ENCODE measurements at regions of chr6 and their contacts with region 1.

Region 1: DNA sequence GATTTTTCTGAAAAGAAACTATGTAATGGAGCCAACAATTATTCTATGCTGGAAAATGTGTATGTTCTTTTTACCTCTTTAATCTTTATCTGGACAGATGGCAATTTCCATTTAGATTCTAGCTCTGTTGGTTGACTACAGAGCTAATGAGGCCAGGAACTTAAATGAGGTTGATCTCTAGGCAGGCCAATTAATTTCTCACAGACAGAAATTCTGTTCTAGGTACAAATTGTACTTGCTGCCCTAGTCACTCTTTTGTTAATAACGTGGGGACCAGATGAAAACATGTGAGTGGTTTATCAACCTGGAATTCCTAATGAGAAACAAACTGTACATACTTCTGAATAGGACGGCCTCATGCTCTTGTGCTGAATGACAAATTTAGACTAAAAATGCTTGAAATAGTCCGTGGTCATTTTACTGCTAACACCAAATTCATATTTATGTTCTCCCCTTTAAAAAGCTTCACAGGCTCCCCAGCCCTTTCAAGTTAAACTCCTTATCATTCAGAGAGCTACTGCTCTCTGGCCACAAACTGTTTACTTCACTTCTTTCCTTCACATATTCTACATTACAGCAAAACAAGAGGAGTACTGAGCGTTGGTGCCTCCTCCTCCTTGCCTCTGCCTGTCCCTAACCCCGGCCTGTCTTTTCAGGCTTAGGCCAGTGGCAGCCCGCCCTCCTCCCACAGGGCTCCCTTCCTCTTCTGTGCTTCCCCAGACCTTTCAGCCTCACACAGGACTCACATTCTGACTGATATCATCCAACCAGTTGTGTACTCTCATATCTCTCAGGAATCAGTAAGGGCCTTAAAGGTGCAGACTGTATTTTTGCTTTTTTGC is 41.4 kb downstream of the DTNBP1 start:
- DNase-seq: no peak
- H3K4me3 ChIP-seq: no peak overlapping the region
- H3K4me3 Mint-ChIP-seq: peak overlapping the region in 1 of 8 donors; percentile 24
- H3K27ac ChIP-seq: no peak overlapping the region
- H3K27ac Mint-ChIP-seq: peak overlapping the region in 3 of 7 donors; percentile 37 to 51 (median 49)
- H3K4me1 ChIP-seq: peaks cover 8% of the 10 kb centered on the region
- H3K4me1 Mint-ChIP-seq: peaks cover 13 to 42% (median 25%) of the 10 kb centered on the region in 4 donors
- H3K27me3 ChIP-seq: no peaks in the 10 kb centered on the region
- H3K27me3 Mint-ChIP-seq: no peaks in the 10 kb centered on the region

Region 2: GRCh38 chr6:14046476-14047068 is 1574.9 kb before region 1 on chr6:
- CTCF ChIA-PET with region 1: no interaction called
- POLR2A ChIA-PET with region 1: no interaction called
- intact Hi-C with region 1: loop called (anchors 5 kb)
- DNase-seq: peak; percentile 30 to 44 (median 37)
- H3K4me3 ChIP-seq: no peak overlapping the region
- H3K4me3 Mint-ChIP-seq: no peak overlapping the region
- H3K27ac ChIP-seq: no peak overlapping the region
- H3K27ac Mint-ChIP-seq: no peak overlapping the region
- H3K4me1 ChIP-seq: no peaks in the 10 kb centered on the region
- H3K4me1 Mint-ChIP-seq: peaks cover 0 to 1% (median 0%) of the 10 kb centered on the region in 4 donors
- H3K27me3 ChIP-seq: no peaks in the 10 kb centered on the region
- H3K27me3 Mint-ChIP-seq: peaks cover 19 to 26% of the 10 kb centered on the region in 2 donors

Region 3: GRCh38 chr6:15608396-15608795 is 13.0 kb before region 1 on chr6:
- CTCF ChIA-PET with region 1: interaction called, 56 read pairs
- POLR2A ChIA-PET with region 1: no interaction called
- intact Hi-C with region 1: no loop called
- DNase-seq: no peak
- H3K4me3 ChIP-seq: no peak overlapping the region
- H3K4me3 Mint-ChIP-seq: no peak overlapping the region
- H3K27ac ChIP-seq: no peak overlapping the region
- H3K27ac Mint-ChIP-seq: no peak overlapping the region
- H3K4me1 ChIP-seq: no peaks in the 10 kb centered on the region
- H3K4me1 Mint-ChIP-seq: peaks cover 9 to 19% (median 13%) of the 10 kb centered on the region in 4 donors
- H3K27me3 ChIP-seq: no peaks in the 10 kb centered on the region
- H3K27me3 Mint-ChIP-seq: no peaks in the 10 kb centered on the region